ENCODE measurements at regions of chr20 and their contacts with region 1.

Region 1: GRCh38 chr20:6026051-6026450 is 27.8 kb downstream of the LRRN4 start:
- DNase-seq: peak in 2 of 3 donors; percentile 13 to 43
- H3K4me3 ChIP-seq: no peak overlapping the region
- H3K27ac ChIP-seq: no peak overlapping the region
- H3K4me1 ChIP-seq: peaks cover 0 to 9% (median 4%) of the 10 kb centered on the region in 4 experiments
- H3K27me3 ChIP-seq: no peaks in the 10 kb centered on the region

Region 2: GRCh38 chr20:5989539-5989938 is 36.5 kb before region 1 on chr20:
- CTCF ChIA-PET with region 1: no interaction called
- POLR2A ChIA-PET with region 1: no interaction called
- DNase-seq: no peak
- H3K4me3 ChIP-seq: no peak overlapping the region
- H3K27ac ChIP-seq: no peak overlapping the region
- H3K4me1 ChIP-seq: no peaks in the 10 kb centered on the region
- H3K27me3 ChIP-seq: no peaks in the 10 kb centered on the region

Region 3: DNA sequence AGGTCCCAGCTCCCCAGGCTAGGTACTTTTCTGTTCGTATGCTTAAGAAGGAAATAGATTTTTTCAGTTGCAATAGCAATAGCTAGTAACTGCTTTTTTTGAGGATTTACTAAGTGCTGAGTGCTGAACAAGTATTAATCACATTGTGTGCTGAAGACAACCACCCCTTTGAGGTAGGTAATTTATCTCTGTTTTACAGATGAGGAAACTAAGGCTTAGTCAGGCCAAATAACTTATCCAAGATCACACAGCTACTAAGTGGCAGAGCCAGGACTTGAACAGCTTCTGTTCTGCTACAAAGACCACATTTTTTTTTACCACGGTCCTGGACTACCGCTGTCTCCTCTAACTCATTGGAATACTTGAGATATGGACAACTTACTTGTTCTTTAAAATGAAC is 12.0 kb before region 1 on chr20:
- CTCF ChIA-PET with region 1: interaction called, 17 read pairs
- POLR2A ChIA-PET with region 1: no interaction called
- DNase-seq: no peak
- H3K4me3 ChIP-seq: no peak overlapping the region
- H3K27ac ChIP-seq: no peak overlapping the region
- H3K4me1 ChIP-seq: no peaks in the 10 kb centered on the region
- H3K27me3 ChIP-seq: no peaks in the 10 kb centered on the region